ENCODE measurements at regions of chr1 and their contacts with region 1.

Region 1: GRCh38 chr1:194024659-194025058 is 838.2 kb upstream of the B3GALT2 start:
- DNase-seq: peak; percentile 94
- H3K4me3 ChIP-seq: no peak overlapping the region
- H3K27ac ChIP-seq: peak overlapping the region; percentile 45
- H3K4me1 ChIP-seq: peaks cover 11% of the 10 kb centered on the region
- H3K27me3 ChIP-seq: no peaks in the 10 kb centered on the region
- CTCF ChIP-seq: no peak
- POLR2A ChIP-seq: no peak

Region 2: GRCh38 chr1:193971595-193971994 is 53.1 kb before region 1 on chr1:
- CTCF ChIA-PET with region 1: no interaction called
- POLR2A ChIA-PET with region 1: no interaction called
- dilution Hi-C with region 1: no loop called
- intact Hi-C with region 1: loop called (anchors 2 kb)
- DNase-seq: peak; percentile 55
- H3K4me3 ChIP-seq: no peak overlapping the region
- H3K27ac ChIP-seq: peak overlapping the region; percentile 34
- H3K4me1 ChIP-seq: peaks cover 3% of the 10 kb centered on the region
- H3K27me3 ChIP-seq: no peaks in the 10 kb centered on the region
- CTCF ChIP-seq: no peak
- POLR2A ChIP-seq: no peak

Region 3: GRCh38 chr1:194014014-194014413 is 10.6 kb before region 1 on chr1:
- CTCF ChIA-PET with region 1: interaction called, 14 read pairs
- POLR2A ChIA-PET with region 1: no interaction called
- dilution Hi-C with region 1: no loop called
- intact Hi-C with region 1: no loop called
- DNase-seq: peak; percentile 59
- H3K4me3 ChIP-seq: no peak overlapping the region
- H3K27ac ChIP-seq: no peak overlapping the region
- H3K4me1 ChIP-seq: no peaks in the 10 kb centered on the region
- H3K27me3 ChIP-seq: no peaks in the 10 kb centered on the region
- CTCF ChIP-seq: no peak
- POLR2A ChIP-seq: no peak

Region 4: DNA sequence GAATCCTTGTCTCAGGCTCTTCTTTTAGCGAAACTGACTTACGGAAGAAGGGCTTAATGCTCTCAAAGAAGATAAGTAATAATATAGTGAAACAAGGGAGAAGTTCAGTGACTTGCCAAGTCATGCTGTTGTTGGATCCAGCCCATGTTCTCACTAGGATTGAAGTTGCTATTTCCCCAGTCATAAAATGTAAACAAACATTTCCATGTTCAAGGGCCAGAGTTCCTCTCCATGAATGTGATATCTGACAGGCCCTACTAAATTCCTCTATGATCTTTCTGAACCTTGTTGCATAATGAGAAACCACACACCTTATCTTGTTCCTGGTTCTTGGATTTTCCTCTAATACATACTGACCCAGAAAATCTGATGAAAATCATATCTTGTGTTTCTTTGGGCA is 38.3 kb after region 1 on chr1:
- CTCF ChIA-PET with region 1: no interaction called
- POLR2A ChIA-PET with region 1: no interaction called
- dilution Hi-C with region 1: no loop called
- intact Hi-C with region 1: loop called (anchors 1 kb)
- DNase-seq: peak; percentile 93
- H3K4me3 ChIP-seq: peak overlapping the region in 1 of 3 experiments; percentile 30
- H3K27ac ChIP-seq: peak overlapping the region; percentile 94
- H3K4me1 ChIP-seq: peaks cover 29% of the 10 kb centered on the region
- H3K27me3 ChIP-seq: no peaks in the 10 kb centered on the region
- CTCF ChIP-seq: no peak
- POLR2A ChIP-seq: no peak

Region 5: GRCh38 chr1:194167956-194168640 is 143.4 kb after region 1 on chr1:
- CTCF ChIA-PET with region 1: no interaction called
- POLR2A ChIA-PET with region 1: no interaction called
- dilution Hi-C with region 1: no loop called
- intact Hi-C with region 1: no loop called
- DNase-seq: no peak
- H3K4me3 ChIP-seq: no peak overlapping the region
- H3K27ac ChIP-seq: no peak overlapping the region
- H3K4me1 ChIP-seq: no peaks in the 10 kb centered on the region
- H3K27me3 ChIP-seq: no peaks in the 10 kb centered on the region
- CTCF ChIP-seq: no peak
- POLR2A ChIP-seq: no peak